ENCODE measurements at regions of chr1 and their contacts with region 1.

Region 1: DNA sequence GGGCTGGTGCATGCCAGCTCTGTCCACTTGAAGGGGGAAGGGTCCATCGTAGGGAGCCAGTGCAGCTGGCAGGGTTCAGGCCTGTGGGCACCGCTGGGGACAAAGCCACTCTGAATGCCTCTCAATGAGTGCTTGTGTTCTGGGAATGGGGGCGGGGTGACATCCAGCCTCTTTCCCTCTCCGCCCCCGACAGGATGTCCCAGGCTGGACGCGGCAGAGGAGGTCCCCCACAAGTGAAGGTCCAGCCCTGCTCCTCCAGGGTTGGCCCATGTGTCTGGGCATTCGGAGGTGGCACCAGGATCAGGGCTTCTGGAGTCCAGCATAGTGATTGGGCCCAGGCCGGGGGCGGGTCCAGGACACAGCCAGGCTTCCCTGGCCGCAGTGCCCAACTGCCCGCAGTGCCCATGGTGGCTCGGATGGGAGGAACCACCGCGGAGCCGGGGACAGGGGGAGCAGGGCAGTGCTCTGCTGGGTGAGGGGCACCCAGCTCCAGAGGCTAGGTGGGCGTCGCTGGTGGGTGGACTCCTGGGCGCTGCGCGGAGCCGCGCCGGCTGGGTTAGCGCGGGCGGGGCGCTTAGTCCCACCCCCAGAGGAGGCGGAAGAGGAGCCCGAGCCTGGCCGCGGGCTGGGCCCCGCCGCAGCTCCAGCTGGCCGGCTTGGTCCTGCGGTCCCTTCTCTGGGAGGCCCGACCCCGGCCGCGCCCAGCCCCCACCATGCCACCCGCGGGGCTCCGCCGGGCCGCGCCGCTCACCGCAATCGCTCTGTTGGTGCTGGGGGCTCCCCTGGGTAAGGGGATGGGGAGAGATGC is at the start of gene SHISA4:
- DNase-seq: peak; percentile 80 to 98 (median 94)

Region 2: DNA sequence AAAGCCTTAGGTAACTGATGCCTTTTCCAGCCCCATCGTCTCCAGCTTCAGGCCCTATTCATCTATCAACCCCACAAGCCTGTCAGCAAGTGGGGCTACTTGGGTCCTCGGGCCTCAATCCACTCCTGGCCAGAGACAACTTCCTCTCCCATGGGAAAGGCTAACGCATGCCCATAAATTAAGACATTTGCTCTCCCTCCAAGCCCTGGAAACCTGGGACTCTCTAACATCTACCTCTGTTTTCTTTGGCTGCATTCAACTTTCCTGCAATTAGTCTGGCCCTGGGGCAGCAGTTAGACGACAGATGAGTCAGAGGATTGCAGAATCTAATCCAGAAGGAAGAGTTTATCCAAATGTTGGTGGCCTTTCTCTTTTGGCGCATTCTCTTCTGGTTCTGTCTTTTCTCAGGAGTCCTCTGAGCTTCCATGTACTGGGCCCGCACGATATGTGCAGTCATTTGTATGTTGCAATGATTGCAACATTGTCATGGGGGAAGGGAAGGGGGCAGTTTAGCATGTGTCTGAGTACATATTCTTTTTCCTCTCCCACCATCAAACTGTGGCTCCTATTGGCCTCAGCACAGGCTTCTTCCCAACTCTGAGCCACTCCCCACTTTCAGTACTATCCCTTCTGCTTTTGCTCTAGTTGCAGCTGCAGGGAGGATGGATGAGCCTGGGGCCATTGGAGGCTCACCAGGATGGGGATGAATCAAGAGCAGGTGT is 295.1 kb before region 1 on chr1:
- intact Hi-C with region 1: no loop called
- DNase-seq: no peak

Region 3: GRCh38 chr1:201813226-201813625 is 75.3 kb before region 1 on chr1:
- intact Hi-C with region 1: no loop called
- DNase-seq: no peak

Region 4: GRCh38 chr1:201828820-201829774 is 59.4 kb before region 1 on chr1 and contains the start of gene IPO9:
- intact Hi-C with region 1: loop called (anchors 5 kb)
- DNase-seq: peak; percentile 85 to 98 (median 94)

Region 5: DNA sequence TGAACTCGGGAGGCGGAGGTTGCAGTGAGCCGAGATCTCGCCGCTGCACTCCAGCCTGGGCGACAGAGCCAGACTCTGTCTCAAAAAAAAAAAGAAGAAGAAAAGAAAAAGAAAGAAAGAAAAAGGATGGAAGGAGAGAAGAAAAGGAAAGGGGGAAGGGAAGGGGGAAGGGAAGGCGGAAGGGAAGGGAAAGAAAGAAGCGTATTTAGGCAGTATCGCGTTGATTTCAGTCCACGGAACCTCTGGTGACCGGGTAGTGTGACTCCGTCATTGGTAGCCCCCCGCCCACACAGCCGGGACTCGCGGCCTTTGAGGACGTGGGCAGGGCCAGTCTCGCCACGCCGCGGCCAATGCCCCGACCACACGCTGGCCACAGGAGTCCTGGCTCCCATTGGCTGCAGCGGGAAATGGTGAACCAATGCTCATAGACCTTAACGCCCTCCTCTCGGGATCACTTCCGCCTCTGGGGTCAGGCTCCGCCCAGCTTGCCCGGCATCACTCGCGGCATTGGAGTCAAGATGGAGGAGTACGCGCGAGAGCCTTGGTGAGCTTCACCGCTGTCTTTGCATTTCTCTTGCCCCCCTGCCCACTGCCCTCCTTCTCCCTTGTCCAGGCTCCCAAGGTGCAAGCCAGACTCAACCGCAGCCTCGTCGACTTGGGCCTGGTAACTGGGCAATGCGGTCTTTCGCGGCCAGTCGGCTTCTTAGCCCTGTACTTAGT is 66.7 kb after region 1 on chr1 and contains the start of gene TIMM17A:
- intact Hi-C with region 1: loop called (anchors 5 kb)
- DNase-seq: peak; percentile 95 to 99 (median 98)

Region 6: GRCh38 chr1:201970334-201971159 is 82.1 kb after region 1 on chr1:
- intact Hi-C with region 1: loop called (anchors 5 kb)
- DNase-seq: no peak

Region 7: GRCh38 chr1:202135221-202135721 is 246.8 kb after region 1 on chr1:
- intact Hi-C with region 1: loop called (anchors 5 kb)
- DNase-seq: peak in 41 of 42 donors; percentile 62 to 90 (median 78)

Measured in head of caudate nucleus (tissue), 42 donors.